Dorsolateral prefrontal cortex (tissue), 120 donors: ENCODE measurements at regions of chr1 and their contacts with region 1.

Region 1: DNA sequence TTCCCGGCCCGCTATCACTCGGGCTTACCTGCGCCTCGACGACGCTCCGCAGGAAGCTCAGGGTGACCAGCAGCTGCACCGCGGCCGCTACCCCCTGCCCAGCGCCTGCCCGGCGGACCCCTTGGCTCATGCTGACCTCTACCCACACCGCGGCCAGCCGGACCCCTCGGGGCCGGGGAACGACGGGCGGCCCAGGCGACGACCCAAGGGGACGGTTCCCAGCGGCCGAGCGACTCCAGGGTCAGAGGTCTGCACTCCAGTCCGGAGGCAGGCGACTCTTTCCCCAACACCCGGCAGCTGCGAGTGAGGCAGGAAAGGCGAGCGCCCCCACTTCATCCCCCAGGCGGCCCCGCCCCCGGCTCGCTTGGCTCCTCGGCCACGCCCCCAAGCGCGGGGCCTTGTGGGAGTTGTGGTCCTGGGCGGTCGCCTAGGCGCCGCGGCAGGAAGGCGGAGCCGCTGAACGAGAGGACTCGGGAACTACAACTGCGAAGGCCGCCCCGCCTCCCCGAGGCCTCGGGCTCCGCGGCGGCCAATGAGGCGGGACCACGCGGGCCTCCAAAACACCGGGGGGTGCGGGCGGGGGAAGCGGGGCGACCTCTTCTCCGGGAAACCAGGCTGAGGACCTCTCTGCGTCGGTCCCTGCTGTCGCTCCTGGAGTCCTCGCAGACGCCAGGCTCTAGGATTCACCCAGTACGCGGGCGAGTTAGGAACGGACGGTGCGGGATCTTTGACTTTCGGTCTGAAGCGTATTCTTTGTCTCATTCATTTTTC is at the start of gene ERO1B:
- DNase-seq: peak; percentile 94 to 100 (median 97)
- H3K4me3 ChIP-seq: peak within 1 kb of the TSS; percentile 66 to 99 (median 93)
- H3K27ac ChIP-seq: peak within 1 kb of the TSS in 50 of 59 donors; percentile 7 to 89 (median 70)
- H3K27me3 ChIP-seq: no peaks in the 10 kb centered on the region
- CTCF ChIP-seq: peak in 49 of 56 donors; percentile 5 to 66 (median 44)
- total RNA-seq, gene ERO1B: 8.1 to 22.9 (median 11.5) TPM

Region 2: DNA sequence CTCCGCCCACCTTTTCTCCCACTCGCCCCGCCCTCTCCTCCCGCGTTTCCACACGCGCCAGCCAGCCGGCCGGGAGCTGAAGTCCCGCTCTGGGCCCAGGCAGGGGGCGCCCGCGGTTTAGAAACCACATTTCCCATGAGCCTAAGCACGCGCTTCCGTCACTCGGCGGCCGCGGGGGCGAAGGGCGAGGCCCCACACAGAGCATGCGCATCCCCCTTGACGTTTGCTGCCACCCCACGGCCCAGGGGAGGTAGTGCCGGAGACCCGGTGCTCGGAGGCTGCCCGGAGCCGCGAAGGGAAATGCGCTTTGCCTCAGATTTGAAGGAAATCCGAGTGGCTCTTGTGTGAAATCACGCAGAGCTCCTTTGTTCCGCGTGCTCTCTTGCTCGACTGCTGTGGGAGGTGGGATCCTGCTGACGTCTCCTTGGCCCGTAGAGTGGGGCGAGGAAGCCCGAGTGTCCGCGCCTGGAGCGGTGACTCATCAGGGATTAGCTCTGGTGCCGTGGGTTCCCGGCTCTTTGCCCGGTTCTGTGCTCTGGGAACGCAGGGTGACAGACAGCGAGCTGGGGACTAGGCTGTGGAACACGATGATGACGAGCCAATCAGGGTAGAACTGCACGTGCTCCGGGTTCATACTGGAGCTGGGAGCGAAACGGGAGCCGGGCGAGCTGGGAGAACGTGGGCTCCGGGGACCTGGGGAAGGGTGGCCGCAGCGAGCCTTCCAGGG is 777.2 kb before region 1 on chr1:
- intact Hi-C with region 1: loop called in 1 of 2 experiments (anchors 5 kb)
- DNase-seq: peak; percentile 98 to 99 (median 99)
- H3K4me3 ChIP-seq: peak overlapping the region; percentile 67 to 95 (median 85)
- H3K27ac ChIP-seq: peak overlapping the region; percentile 72 to 100 (median 97)
- H3K27me3 ChIP-seq: no peaks in the 10 kb centered on the region
- CTCF ChIP-seq: peak; percentile 61 to 99 (median 94)

Region 3: DNA sequence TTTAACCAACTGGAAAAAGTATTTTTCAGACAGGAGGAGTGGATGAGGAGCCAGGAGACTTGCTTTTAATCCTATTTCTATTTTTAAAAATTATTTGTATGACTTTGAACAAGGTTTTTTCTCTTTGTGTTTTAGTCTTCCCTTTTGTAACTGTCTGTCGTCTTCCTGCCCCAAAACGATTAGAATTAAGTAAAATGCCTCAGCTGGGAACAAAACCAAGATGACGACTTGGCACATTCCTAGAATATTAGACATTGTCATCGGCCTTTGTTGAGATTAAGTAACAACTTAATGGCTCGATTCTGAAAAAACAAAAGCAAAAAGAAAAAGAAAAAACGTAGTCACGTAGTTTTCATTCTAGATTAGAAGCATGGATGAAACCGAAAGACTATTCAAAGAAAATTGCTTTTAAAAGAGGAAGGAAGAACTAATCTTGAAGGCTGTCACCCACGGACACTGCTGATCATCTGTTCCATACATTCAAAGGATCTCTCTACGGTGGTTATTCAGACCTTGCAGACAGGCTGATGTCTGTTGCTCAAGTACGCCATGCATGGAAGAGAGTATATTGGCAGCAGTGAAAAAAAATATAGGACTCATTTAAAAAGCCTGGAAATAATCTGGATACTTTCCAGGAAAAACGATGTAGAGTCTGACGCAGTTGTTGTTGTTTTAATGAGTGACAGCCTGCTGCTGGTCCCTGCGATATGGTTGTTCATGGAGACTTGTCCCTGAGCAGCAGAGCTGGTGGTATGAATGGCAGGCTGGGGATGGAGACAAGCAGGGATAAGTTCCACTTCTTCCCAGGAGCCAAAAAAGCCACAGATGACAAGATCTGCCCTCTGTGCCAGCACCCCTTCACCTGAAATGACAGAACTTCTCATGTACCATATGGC is 649.1 kb before region 1 on chr1:
- intact Hi-C with region 1: no loop called
- DNase-seq: peak in 2 of 10 donors; percentile 23 to 77
- H3K4me3 ChIP-seq: peak overlapping the region in 39 of 59 donors; percentile 1 to 54 (median 31)
- H3K27ac ChIP-seq: peak overlapping the region in 19 of 59 donors; percentile 2 to 67 (median 32)
- H3K27me3 ChIP-seq: peaks cover 0 to 7% (median 0%) of the 10 kb centered on the region in 45 donors
- CTCF ChIP-seq: no peak

Region 4: DNA sequence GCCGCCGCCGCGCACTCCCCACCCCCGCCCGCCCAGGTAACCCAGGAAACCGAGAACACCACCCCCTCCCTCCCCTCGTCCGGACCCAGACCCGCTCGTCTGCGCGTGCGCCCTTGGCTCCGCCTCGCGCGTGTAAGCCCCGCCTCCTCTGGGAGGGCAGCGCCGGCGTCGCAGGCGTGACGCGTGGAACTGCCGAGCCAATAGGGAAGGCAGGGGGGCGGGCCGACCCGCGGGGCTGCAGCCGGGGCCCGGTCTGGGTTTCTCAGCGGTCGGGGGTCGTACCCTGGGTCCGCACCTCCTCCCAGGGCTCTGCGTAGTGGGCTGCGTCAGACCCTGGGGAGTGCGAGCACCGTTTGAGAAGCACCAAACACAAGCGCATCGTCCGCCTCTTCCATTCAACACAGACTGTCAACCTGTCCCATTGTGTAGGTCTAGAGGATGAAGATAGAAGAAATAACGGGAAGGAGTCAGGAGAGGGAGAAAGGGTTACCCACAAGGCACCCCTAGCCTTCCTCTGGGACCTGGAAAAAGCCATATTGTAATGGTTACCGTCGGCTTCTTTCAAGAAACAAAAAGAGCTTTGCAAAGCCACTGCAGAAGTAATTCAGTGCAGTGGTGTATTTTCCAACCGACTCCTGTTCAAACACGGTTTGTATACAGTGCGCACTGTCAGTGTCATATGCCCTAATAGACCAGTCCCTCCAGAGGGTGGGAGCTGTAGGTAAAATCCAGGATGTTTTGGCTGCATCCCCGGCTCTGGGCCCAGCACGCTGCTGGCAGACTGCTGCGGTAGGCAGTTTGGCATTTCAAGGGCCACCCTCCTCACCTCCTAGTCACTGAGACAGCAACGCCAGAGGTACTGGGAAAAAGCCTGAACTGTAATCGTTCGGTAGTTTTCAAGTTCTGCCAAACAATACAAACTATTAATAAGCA is 414.7 kb before region 1 on chr1:
- intact Hi-C with region 1: loop called in 1 of 2 experiments (anchors 5 kb)
- DNase-seq: peak; percentile 93 to 99 (median 96)
- H3K4me3 ChIP-seq: peak overlapping the region; percentile 56 to 100 (median 97)
- H3K27ac ChIP-seq: peak overlapping the region; percentile 49 to 98 (median 92)
- H3K27me3 ChIP-seq: no peaks in the 10 kb centered on the region
- CTCF ChIP-seq: peak in 4 of 56 donors; percentile 13 to 24 (median 17)

Region 5: GRCh38 chr1:236103646-236104218 is 178.1 kb before region 1 on chr1:
- intact Hi-C with region 1: loop called in 1 of 2 experiments (anchors 10 kb)
- DNase-seq: peak in 6 of 10 donors; percentile 30 to 61 (median 56)
- H3K4me3 ChIP-seq: peak overlapping the region in 19 of 59 donors; percentile 12 to 47 (median 29)
- H3K27ac ChIP-seq: no peak overlapping the region
- H3K27me3 ChIP-seq: peaks cover 0 to 23% (median 0%) of the 10 kb centered on the region in 45 donors
- CTCF ChIP-seq: peak; percentile 69 to 97 (median 89)

Region 6: GRCh38 chr1:236142253-236143103 is 139.4 kb before region 1 on chr1 and contains the start of gene GPR137B:
- intact Hi-C with region 1: loop called (anchors 5 to 10 kb)
- DNase-seq: peak in 8 of 10 donors; percentile 48 to 81 (median 72)
- H3K4me3 ChIP-seq: peak within 1 kb of the TSS; percentile 49 to 93 (median 82)
- H3K27ac ChIP-seq: peak within 1 kb of the TSS in 52 of 59 donors; percentile 16 to 86 (median 64)
- H3K27me3 ChIP-seq: no peaks in the 10 kb centered on the region
- CTCF ChIP-seq: peak in 1 of 56 donors; percentile 9
- total RNA-seq, gene GPR137B: 21.7 to 63.1 (median 38.2) TPM

Region 7: DNA sequence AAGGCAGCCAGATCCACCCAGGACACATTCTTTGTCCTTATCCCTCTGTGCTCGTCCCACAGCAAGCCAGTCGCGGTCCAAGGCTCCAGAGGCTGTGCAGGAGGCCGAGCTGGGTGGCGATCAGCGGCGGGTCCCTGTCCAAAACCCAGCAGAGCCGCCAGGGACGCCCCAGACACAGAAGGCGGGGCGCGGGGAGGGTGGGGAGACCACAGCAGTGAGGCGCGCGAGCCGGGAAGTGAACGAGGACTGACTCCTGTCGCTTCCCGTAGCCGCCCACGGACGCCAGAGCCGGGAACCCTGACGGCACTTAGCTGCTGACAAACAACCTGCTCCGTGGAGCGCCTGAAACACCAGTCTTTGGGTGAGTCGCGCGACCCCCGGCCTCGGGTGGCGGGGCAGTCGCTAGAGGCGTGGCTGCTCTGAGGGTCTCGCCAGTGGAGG is 241.9 kb after region 1 on chr1 and contains the start of gene LGALS8:
- intact Hi-C with region 1: loop called in 1 of 2 experiments (anchors 5 kb)
- DNase-seq: peak; percentile 75 to 94 (median 87)
- H3K4me3 ChIP-seq: peak within 1 kb of the TSS; percentile 66 to 100 (median 95)
- H3K27ac ChIP-seq: peak within 1 kb of the TSS in 58 of 59 donors; percentile 30 to 93 (median 80)
- H3K27me3 ChIP-seq: no peaks in the 10 kb centered on the region
- CTCF ChIP-seq: peak in 13 of 56 donors; percentile 9 to 30 (median 22)
- total RNA-seq, gene LGALS8: 33.6 to 99.3 (median 70.0) TPM

Region 8: GRCh38 chr1:236795035-236795756 is 513.4 kb after region 1 on chr1 and contains the start of gene MTR:
- intact Hi-C with region 1: loop called (anchors 2 to 10 kb)
- DNase-seq: peak; percentile 95 to 99 (median 98)
- H3K4me3 ChIP-seq: peak within 1 kb of the TSS; percentile 73 to 100 (median 94)
- H3K27ac ChIP-seq: peak within 1 kb of the TSS in 58 of 59 donors; percentile 20 to 92 (median 78)
- H3K27me3 ChIP-seq: no peaks in the 10 kb centered on the region
- CTCF ChIP-seq: peak in 32 of 56 donors; percentile 1 to 59 (median 26)
- total RNA-seq, gene MTR: 24.7 to 58.2 (median 42.2) TPM